K562 (cell line): ENCODE measurements at regions of chr14 and their contacts with region 1.

Region 1: GRCh38 chr14:32252030-32252670 is 49.1 kb upstream of the RNU6-8 start:
- DNase-seq: peak; percentile 22 to 67 (median 45)
- ATAC-seq: peak; percentile 95
- H3K4me3 ChIP-seq: no peak overlapping the region
- H3K27ac ChIP-seq: no peak overlapping the region
- H3K4me1 ChIP-seq: no peaks in the 10 kb centered on the region
- H3K27me3 ChIP-seq: no peaks in the 10 kb centered on the region
- CTCF ChIP-seq: peak; percentile 73 to 85 (median 77)
- EP300 ChIP-seq: no peak
- POLR2A ChIP-seq: no peak
- RAD21 ChIP-seq: peak; percentile 84 to 93

Region 2: DNA sequence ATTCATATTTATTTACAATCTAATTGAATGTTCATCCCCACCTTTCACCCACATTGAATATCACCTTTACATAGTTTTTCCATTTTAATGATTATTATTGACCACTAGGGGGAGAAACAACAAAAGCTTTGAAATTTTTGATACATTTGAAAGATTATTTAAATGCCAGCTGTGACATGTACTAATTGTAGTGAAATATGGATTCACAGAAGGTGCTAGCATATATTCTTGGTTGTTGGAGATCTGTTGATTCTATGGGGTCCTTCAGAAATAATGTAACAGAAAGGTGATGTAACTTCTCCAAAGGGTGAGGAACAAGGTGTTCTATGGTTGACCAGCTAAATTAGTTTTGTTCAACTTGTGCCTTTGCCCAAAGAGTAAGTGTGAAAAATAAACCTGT is 741.9 kb before region 1 on chr14:
- CTCF ChIA-PET with region 1: no interaction called
- POLR2A ChIA-PET with region 1: no interaction called
- in situ Hi-C with region 1: loop called (anchors 25 kb)
- intact Hi-C with region 1: loop called (anchors 5 kb)
- DNase-seq: peak; percentile 9 to 21 (median 14)
- ATAC-seq: no peak
- H3K4me3 ChIP-seq: no peak overlapping the region
- H3K27ac ChIP-seq: no peak overlapping the region
- H3K4me1 ChIP-seq: no peaks in the 10 kb centered on the region
- H3K27me3 ChIP-seq: no peaks in the 10 kb centered on the region; a peak in 1 of 5 replicates
- CTCF ChIP-seq: peak in 2 of 3 experiments; percentile 9 to 49; a peak in 3 of 6 replicates
- EP300 ChIP-seq: no peak
- POLR2A ChIP-seq: no peak
- RAD21 ChIP-seq: peak; percentile 41 to 70; a peak in 3 of 4 replicates

Region 3: DNA sequence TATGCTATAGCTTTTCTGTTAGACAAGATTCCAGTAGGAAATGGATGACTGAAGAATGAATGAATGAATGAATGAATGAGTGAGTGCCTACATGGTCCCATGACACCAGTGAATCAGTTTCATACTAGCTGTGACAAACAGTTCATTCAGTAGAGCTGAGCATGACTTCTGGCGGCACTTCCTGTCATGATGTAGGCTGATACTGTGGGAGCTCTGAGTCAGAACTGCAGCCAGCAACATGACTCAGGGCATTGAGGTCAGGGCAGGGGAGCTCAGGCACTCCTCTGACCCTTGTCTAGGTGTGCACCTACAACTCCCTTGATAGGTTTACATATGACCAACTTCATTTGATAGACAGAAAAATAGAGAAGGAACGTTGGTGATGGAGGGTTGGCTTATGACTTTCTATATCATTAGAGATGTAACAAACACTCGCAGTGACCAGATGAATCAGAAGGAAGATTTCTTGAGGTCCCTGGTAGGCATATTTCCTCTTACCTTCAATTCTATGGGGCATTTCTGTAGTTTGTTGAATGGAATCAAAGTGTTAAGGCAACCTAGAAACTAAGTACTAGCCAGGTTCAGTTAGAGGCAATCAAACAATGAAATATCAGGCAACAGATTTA is 314.3 kb before region 1 on chr14:
- CTCF ChIA-PET with region 1: interaction called, 15 read pairs
- POLR2A ChIA-PET with region 1: no interaction called
- in situ Hi-C with region 1: loop called (anchors 5 kb)
- intact Hi-C with region 1: loop called (anchors 2 kb)
- DNase-seq: peak; percentile 36 to 79 (median 48)
- ATAC-seq: peak; percentile 98
- H3K4me3 ChIP-seq: no peak overlapping the region
- H3K27ac ChIP-seq: peak overlapping the region; percentile 76
- H3K4me1 ChIP-seq: peaks cover 0 to 3% of the 10 kb centered on the region in 2 experiments; a peak in 4 of 5 replicates
- H3K27me3 ChIP-seq: no peaks in the 10 kb centered on the region
- CTCF ChIP-seq: no peak
- EP300 ChIP-seq: peak; percentile 56; the same call in 1 of the 2 replicates
- POLR2A ChIP-seq: no peak
- RAD21 ChIP-seq: peak in 1 of 2 experiments; percentile 17; a peak in 2 of 4 replicates

Region 4: DNA sequence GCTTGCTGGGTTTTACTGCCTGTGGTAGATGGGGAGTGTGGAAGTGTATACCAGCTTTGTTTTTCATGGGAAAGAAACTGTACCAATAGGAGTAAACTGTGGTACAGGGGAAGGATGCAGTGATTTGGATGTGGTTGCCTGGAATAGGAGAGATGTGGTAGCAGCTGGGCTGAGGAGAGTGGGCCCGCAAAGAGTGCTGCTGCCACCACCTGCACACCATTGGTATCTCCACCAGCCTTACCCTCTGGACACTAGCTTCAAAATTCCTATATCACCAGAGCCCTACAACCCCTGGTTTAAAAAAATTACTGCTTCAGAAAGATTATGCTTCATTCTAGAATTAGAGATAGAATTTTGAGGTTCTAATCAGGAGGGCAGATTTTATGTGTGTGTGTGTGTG is 130.6 kb after region 1 on chr14:
- CTCF ChIA-PET with region 1: no interaction called
- POLR2A ChIA-PET with region 1: no interaction called
- in situ Hi-C with region 1: no loop called
- intact Hi-C with region 1: loop called (anchors 2 kb)
- DNase-seq: peak in 1 of 4 experiments; percentile 12
- ATAC-seq: peak; percentile 74; the same call in 2 of the 3 replicates
- H3K4me3 ChIP-seq: no peak overlapping the region
- H3K27ac ChIP-seq: no peak overlapping the region
- H3K4me1 ChIP-seq: 0 out of 5 replicates have a peak, but pooled peaks cover 0 to 2% of the 10 kb centered on the region in 2 experiments
- H3K27me3 ChIP-seq: no peaks in the 10 kb centered on the region
- CTCF ChIP-seq: peak; percentile 28 to 43 (median 32); a peak in 4 of 6 replicates
- EP300 ChIP-seq: no peak
- POLR2A ChIP-seq: no peak
- RAD21 ChIP-seq: peak in 1 of 2 experiments; percentile 51; a peak in 2 of 4 replicates

Region 5: DNA sequence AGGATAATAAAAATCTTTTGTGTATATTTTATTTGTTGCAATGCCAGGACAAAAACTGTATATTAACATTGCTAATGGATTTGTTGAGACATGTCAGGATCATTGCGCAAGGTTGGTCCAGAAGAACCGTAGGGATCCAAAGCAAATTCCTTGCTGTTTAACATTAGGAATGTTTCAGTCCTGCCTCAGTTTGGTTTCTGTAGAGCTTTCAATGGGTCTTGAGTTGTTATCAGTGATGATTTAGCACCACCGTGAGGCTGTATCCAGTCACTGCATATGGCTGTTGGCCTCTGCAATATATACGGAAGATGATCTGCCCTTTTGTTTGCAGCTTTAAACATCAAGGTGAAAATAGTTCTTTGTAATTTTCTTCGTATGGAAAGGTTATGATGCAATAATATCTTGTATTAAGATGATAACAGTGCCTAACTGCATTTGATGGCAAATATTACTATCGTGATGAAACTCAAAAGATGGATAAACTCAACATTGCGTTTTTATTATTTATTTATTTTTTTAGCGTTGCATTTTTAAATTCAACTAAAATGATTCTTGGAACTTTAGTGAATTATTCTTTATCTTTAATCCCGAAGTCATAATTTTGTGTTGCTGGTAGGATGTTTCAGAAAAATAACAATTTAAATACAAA is 308.2 kb after region 1 on chr14:
- CTCF ChIA-PET with region 1: no interaction called
- POLR2A ChIA-PET with region 1: no interaction called
- in situ Hi-C with region 1: no loop called
- intact Hi-C with region 1: loop called (anchors 5 kb)
- DNase-seq: peak; percentile 40 to 56 (median 44)
- ATAC-seq: peak; percentile 76
- H3K4me3 ChIP-seq: no peak overlapping the region
- H3K27ac ChIP-seq: no peak overlapping the region
- H3K4me1 ChIP-seq: no peaks in the 10 kb centered on the region
- H3K27me3 ChIP-seq: no peaks in the 10 kb centered on the region
- CTCF ChIP-seq: peak; percentile 59 to 78 (median 68)
- EP300 ChIP-seq: no peak
- POLR2A ChIP-seq: no peak
- RAD21 ChIP-seq: peak; percentile 73 to 74